ENCODE measurements at regions of chr11 and their contacts with region 1.

Region 1: GRCh38 chr11:69683764-69684333 is 8.7 kb upstream of the LTO1 start:
- DNase-seq: no peak
- ATAC-seq: no peak
- H3K4me3 ChIP-seq: no peak overlapping the region
- H3K27ac ChIP-seq: no peak overlapping the region
- H3K4me1 ChIP-seq: no peaks in the 10 kb centered on the region
- H3K27me3 ChIP-seq: no peaks in the 10 kb centered on the region
- CTCF ChIP-seq: no peak

Region 2: DNA sequence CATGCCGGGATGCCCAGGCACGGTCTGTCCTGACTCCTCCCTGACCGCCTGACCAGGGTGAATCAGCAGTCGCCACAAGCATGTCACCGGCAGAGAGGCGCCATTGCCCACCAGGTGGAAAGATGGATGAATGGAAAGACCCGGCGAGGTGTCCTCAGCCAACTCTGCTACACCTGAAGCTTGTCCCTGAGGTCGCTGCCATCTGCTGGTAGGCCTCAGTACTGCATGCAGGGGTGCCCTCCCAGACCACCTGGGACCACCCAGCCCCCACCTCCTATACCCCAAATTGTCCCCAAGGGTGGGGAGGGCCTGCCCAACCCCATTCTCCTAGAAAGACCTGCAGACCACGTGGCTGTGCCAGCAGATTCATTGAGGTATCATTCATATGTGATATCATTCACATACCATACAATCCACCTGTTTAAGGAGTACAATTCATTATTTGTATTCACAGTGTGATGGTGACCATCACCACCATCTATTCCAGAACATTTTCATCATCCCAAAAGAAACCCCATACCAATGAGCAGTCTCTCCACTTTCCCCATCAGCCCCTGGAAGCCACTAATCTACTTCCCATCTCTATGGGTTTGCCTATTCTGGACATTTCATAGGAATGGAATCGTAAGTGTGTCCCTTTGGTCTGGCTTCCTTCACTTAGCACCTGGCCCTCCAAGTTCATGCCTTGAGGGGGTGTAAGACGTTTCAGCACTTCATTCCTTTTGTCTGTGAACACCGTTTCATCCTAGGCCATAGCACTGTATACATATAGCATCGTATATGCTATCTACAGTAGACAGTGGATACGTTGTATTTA is 117.9 kb after region 1 on chr11:
- intact Hi-C with region 1: loop called in 1 of 2 experiments (anchors 5 kb)
- DNase-seq: no peak
- ATAC-seq: no peak
- H3K4me3 ChIP-seq: no peak overlapping the region
- H3K27ac ChIP-seq: no peak overlapping the region
- H3K4me1 ChIP-seq: no peaks in the 10 kb centered on the region
- H3K27me3 ChIP-seq: peaks cover 0 to 9% (median 0%) of the 10 kb centered on the region in 3 donors
- CTCF ChIP-seq: peak; percentile 44

Region 3: GRCh38 chr11:69825037-69825834 is 141.4 kb after region 1 on chr11:
- intact Hi-C with region 1: no loop called
- DNase-seq: peak in 1 of 2 donors; percentile 12
- ATAC-seq: no peak
- H3K4me3 ChIP-seq: no peak overlapping the region
- H3K27ac ChIP-seq: no peak overlapping the region
- H3K4me1 ChIP-seq: no peaks in the 10 kb centered on the region
- H3K27me3 ChIP-seq: peaks cover 0 to 47% (median 8%) of the 10 kb centered on the region in 3 donors
- CTCF ChIP-seq: no peak

Region 4: GRCh38 chr11:69841859-69842698 is 158.2 kb after region 1 on chr11:
- intact Hi-C with region 1: no loop called
- DNase-seq: no peak
- ATAC-seq: no peak
- H3K4me3 ChIP-seq: no peak overlapping the region
- H3K27ac ChIP-seq: no peak overlapping the region
- H3K4me1 ChIP-seq: no peaks in the 10 kb centered on the region
- H3K27me3 ChIP-seq: peaks cover 0 to 30% (median 5%) of the 10 kb centered on the region in 3 donors
- CTCF ChIP-seq: no peak

Region 5: GRCh38 chr11:69888483-69889076 is 204.7 kb after region 1 on chr11:
- intact Hi-C with region 1: loop called (anchors 1 to 5 kb)
- DNase-seq: peak; percentile 47 to 70
- ATAC-seq: peak; percentile 42 to 71 (median 59)
- H3K4me3 ChIP-seq: no peak overlapping the region
- H3K27ac ChIP-seq: no peak overlapping the region
- H3K4me1 ChIP-seq: no peaks in the 10 kb centered on the region
- H3K27me3 ChIP-seq: peaks cover 0 to 38% (median 4%) of the 10 kb centered on the region in 3 donors
- CTCF ChIP-seq: peak; percentile 74

Region 6: GRCh38 chr11:70191495-70192140 is 507.8 kb after region 1 on chr11:
- intact Hi-C with region 1: loop called (anchors 2 kb)
- DNase-seq: peak; percentile 74 to 88
- ATAC-seq: peak; percentile 87 to 94 (median 92)
- H3K4me3 ChIP-seq: no peak overlapping the region
- H3K27ac ChIP-seq: no peak overlapping the region
- H3K4me1 ChIP-seq: no peaks in the 10 kb centered on the region
- H3K27me3 ChIP-seq: peaks cover 0 to 15% (median 0%) of the 10 kb centered on the region in 3 donors
- CTCF ChIP-seq: peak; percentile 85